ENCODE measurements at regions of chr15 and their contacts with region 1.

Region 1: GRCh38 chr15:69452692-69453521 is at the start of gene RPLP1:
- DNase-seq: peak; percentile 92
- H3K4me3 ChIP-seq: peak within 1 kb of the TSS; percentile 85
- H3K27ac ChIP-seq: peak within 1 kb of the TSS; percentile 66
- H3K27me3 ChIP-seq: no peaks in the 10 kb centered on the region
- CTCF ChIP-seq: no peak
- polyA plus RNA-seq, gene RPLP1: 722 and 1,256 TPM in 2 replicates

Region 2: GRCh38 chr15:69154684-69155083 is 298.2 kb before region 1 on chr15:
- CTCF ChIA-PET with region 1: no interaction called
- POLR2A ChIA-PET with region 1: no interaction called
- DNase-seq: peak; percentile 71
- H3K4me3 ChIP-seq: no peak overlapping the region
- H3K27ac ChIP-seq: peak overlapping the region; percentile 60
- H3K27me3 ChIP-seq: peaks cover 4% of the 10 kb centered on the region
- CTCF ChIP-seq: no peak

Region 3: DNA sequence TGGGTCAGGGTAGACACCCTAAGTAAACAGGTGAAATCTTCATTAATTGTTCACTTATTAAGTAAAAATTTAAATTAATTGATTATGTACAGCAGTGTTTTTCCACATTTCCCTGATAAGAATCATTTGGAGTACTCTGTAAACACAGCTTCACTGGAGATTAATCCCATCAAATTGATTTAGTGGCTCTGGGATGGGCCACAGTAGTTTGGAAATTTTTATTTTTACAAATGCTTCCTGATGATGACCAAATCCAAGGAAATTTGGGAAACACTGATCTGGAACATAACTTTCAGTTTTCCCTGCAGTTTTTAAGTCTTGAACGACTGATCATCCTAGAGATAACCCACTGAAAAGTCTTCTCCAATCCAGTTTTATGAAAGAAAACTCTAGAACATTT is 19.1 kb before region 1 on chr15:
- CTCF ChIA-PET with region 1: no interaction called
- POLR2A ChIA-PET with region 1: interaction called, 13 read pairs
- DNase-seq: no peak
- H3K4me3 ChIP-seq: no peak overlapping the region
- H3K27ac ChIP-seq: no peak overlapping the region
- H3K27me3 ChIP-seq: no peaks in the 10 kb centered on the region
- CTCF ChIP-seq: no peak

Region 4: DNA sequence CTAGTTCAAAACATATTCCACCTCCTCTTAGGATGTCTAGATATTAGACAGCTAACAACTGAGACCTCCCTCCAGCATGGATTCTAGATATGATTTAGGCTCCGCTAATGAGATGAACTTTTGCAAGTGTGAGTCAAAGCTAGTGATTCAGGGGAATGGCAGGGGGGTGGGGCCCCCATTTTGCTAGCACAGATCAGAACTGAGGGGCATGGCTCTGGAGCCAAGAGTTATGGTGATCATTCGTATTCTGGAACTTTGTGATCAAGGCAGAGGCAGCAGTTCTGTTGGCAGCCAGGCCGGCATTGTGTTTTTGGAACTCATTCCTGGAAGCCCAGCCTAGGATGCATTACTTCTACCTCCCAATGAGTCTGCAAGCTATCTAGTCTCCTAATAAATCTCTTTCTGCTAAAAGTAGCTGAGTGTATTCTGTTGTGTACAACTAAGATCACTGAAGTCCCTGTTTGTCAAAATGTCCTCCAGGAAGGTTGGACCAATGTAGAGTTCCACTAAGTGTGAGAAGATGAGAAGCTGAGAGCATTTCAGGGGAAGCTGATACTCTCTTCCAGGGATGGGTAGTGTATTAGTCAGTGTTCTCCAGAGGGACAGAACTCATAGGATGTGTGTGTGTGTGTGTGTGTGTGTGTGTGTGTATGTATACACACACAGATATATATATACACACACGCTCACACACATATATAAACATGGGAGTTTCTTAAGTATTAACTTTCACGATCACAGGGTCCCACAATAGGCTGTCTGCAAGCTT is 332.1 kb after region 1 on chr15:
- CTCF ChIA-PET with region 1: no interaction called
- POLR2A ChIA-PET with region 1: no interaction called
- DNase-seq: no peak
- H3K4me3 ChIP-seq: no peak overlapping the region
- H3K27ac ChIP-seq: no peak overlapping the region
- H3K27me3 ChIP-seq: no peaks in the 10 kb centered on the region
- CTCF ChIP-seq: no peak